Right ventricle myocardium superior (tissue), 1 donor: ENCODE measurements at regions of chr18 and their contacts with region 1.

Region 1: GRCh38 chr18:68847219-68847837 is 49.4 kb downstream of the CCDC102B start:
- DNase-seq: no peak
- ATAC-seq: no peak

Region 2: GRCh38 chr18:69177702-69178101 is 330.4 kb after region 1 on chr18:
- intact Hi-C with region 1: no loop called
- DNase-seq: no peak
- ATAC-seq: no peak

Region 3: DNA sequence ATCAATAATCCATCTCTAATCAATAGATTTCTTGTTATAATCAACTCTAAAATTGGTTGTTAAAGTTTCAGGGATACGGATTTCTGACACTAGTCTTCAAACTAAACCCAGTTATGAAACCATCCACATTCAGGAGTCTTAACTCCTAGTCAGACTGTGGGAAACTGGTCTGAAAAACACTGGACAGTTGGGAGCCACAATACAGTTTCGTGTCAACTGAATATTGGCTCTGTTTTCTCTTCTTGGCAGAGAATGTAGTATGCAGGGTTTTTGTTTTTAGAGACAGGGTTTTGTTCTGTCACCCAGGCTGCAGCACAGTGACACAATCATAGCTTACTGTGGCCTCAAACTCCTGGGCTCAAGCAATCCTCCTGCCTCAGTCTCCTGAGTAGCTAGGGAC is 1235.1 kb after region 1 on chr18:
- intact Hi-C with region 1: loop called (anchors 5 kb)
- DNase-seq: no peak
- ATAC-seq: no peak